Right ventricle myocardium inferior (tissue), 1 donor: ENCODE measurements at regions of chr10 and their contacts with region 1.

Region 1: DNA sequence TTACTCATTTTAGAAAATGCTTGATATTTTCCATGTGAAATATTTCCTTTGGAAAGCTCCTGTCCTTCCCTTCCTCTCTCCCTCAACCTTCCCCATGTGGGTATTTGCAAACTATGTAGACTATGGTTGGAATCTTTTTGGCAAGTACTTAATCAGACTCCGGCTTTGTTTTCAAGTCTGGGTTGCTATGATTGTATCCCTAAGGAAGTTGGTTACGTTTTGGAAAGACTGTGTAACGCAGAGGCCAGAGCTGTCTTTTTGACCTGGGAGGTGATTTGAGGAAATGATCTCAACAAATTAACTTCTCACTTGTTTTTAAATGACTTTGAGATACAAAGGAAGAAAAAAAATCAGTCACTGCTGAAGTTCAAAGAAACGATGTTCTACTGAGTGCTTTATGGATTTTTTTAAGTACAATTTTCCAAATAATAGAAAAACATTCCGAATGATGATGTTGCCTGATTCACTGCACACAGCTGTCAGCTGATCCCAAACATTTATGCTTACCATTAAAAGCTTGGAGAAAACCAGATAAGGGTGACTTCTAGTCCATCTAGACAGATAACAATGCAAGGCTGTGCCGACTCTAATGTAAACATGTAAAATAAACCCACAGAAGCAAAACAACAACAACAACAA is 145.5 kb upstream of the CELF2 start:
- DNase-seq: no peak
- ATAC-seq: peak; percentile 95

Region 2: DNA sequence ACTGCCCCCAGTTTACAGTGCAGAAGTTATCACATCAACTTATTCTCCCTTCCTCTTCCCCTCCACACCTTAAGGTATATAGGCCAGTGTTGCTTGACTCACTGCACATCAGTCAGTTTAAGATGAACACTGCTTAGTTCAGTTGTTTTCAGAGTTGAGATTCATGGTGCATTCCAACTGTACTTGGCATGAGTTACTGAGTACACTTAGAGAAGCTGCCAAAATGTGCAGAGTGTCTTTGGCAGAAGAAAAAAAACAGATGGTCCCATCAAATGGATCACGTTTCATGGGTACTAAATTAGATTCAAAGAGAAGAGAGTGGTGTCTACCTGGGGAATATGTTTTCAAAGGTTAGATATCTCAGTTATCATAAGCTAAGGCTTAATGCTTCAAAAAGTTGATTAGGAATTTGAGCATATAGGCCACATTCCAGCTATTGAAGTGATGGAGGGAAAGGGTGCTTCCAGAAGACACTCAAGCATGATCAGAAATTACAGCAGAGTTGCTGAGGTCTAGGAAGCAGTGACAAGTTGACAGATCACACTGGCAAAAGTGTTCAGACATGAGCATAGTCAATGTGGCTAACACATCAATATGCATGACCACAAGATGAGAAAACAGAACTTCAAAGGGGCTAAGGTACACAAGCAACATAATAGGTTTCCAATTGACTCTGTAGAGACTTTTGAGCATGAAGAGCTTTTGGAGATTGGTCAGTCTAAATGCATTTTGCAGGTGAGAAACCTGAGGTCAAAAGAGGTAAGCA is 433.6 kb before region 1 on chr10:
- intact Hi-C with region 1: no loop called
- DNase-seq: no peak
- ATAC-seq: peak; percentile 56

Region 3: GRCh38 chr10:10831085-10831484 is 41.1 kb before region 1 on chr10:
- intact Hi-C with region 1: loop called (anchors 5 kb)
- DNase-seq: no peak
- ATAC-seq: peak; percentile 44

Region 4: GRCh38 chr10:11162828-11163599 is 290.9 kb after region 1 on chr10:
- intact Hi-C with region 1: no loop called
- DNase-seq: no peak
- ATAC-seq: peak; percentile 35